GM13976 (cell line): ENCODE measurements at regions of chr18 and their contacts with region 1.

Region 1: GRCh38 chr18:11553098-11553940 is 56.1 kb upstream of the SLC35G4 start:
- DNase-seq: peak; percentile 70
- CTCF ChIP-seq: peak; percentile 75

Region 2: GRCh38 chr18:10560450-10561045 is 992.8 kb before region 1 on chr18:
- in situ Hi-C with region 1: loop called (anchors 25 kb)
- DNase-seq: peak; percentile 79
- CTCF ChIP-seq: peak; percentile 59

Region 3: DNA sequence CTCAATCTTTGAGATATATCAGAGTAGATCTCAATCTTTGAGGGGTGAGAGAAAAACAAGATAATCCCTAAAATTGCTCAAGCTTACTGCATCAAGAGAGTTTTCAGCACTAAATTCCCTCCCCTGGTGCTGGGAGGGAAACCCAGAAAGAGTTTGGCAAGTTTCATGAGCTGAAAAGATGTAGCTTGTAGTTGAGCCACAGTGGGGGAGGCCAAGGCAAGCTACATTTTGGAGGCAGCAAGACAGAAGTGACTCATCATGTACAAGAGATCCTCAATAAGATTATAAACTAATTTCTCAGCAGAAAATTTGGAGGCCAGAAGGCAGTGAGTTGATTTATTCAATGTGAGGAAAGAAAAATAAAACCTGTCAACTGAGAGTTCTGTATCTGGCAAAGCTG is 712.1 kb before region 1 on chr18:
- in situ Hi-C with region 1: loop called (anchors 25 kb)
- DNase-seq: no peak
- CTCF ChIP-seq: no peak

Region 4: GRCh38 chr18:11136241-11136640 is 417.1 kb before region 1 on chr18:
- in situ Hi-C with region 1: no loop called
- DNase-seq: no peak
- CTCF ChIP-seq: no peak

Region 5: DNA sequence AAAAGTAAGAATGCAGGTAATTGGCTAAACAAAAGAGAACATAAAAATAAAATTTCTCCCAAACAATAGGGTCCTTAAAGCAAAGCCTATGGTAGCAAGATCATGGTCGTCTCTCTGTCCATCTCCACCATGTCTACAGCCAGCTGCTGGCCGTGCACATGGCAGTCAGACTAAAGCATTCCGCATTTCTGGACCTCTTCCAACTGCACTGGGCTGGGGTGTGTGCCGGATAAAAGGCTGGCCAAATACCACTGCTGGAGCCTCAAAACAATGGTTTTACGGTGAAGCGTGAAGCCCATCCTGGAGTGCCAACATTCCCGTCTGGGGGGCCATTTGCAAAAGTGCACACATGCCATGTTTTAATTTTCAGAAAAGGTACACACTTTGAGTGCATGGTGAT is 329.2 kb before region 1 on chr18:
- in situ Hi-C with region 1: no loop called
- DNase-seq: no peak
- CTCF ChIP-seq: no peak